ENCODE measurements at regions of chr19 and their contacts with region 1.

Region 1: GRCh38 chr19:29671393-29672160 is 6.3 kb downstream of the PLEKHF1 start:
- DNase-seq: peak in 2 of 3 donors; percentile 63 to 72
- ATAC-seq: peak; percentile 58 to 67 (median 61)
- H3K4me3 ChIP-seq: no peak overlapping the region
- H3K27ac ChIP-seq: peak overlapping the region; percentile 23 to 60 (median 43)
- H3K4me1 ChIP-seq: peaks cover 0 to 83% (median 31%) of the 10 kb centered on the region in 4 donors
- H3K27me3 ChIP-seq: no peaks in the 10 kb centered on the region
- CTCF ChIP-seq: peak in 2 of 4 donors; percentile 8 to 38
- POLR2A ChIP-seq: no peak

Region 2: DNA sequence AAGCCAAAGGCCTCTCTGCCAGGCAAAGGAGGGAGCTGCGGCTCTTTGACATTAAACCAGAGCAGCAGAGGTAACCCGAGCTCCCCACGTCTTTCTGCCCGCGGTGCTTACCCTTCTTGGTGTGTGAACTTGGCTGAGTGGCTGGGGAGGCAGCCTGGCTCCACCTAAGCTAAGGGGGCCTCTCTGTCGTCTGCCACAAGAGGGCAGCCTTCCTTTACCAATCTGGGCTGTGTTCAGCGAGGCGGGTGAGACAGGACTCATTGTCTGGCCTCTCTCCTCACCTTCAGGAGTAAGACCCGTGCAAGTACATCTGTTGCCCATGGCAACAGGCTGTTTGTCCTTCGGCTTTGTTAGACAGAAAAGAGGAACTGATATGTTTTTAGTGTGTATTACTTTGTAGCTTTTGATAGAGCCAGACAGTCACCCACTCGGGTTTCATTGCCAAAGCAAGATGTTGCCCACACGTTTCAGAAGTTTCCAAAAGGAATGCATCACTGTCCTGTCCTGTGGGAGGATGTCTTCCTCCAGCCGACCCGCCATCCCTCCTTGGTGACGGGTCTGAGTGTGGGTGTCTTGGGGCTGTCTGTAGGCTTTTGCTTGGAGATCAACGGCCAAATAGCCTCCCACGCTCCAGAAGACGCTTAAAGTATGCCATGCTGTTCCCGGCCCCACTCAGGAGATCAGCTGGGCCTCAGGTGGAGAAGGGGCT is 60.9 kb before region 1 on chr19:
- intact Hi-C with region 1: loop called (anchors 10 kb)
- DNase-seq: peak; percentile 81 to 83 (median 82)
- ATAC-seq: peak; percentile 71 to 81 (median 76)
- H3K4me3 ChIP-seq: no peak overlapping the region
- H3K27ac ChIP-seq: no peak overlapping the region
- H3K4me1 ChIP-seq: peaks cover 0 to 28% (median 10%) of the 10 kb centered on the region in 4 donors
- H3K27me3 ChIP-seq: no peaks in the 10 kb centered on the region
- CTCF ChIP-seq: peak; percentile 81 to 96 (median 91)
- POLR2A ChIP-seq: no peak

Region 3: DNA sequence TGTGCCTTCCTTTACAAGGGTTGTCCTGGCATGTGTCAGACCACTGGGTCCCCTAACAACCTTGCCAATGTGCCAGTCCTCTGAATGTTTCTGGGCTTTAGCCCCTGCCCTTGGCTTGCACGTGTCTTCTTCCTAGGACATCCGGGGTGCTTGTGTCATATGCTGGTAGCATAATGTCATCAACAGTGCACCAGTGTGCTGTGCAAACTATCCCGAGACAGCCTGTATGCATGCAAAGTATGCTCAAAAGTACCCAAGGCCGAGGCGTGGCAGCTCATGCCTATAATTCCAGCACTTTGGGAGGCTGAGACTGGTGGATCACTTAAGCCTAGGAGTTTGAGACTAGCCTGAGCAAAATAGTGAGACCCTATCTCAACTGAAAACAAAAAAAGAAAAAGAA is 64.2 kb after region 1 on chr19:
- intact Hi-C with region 1: no loop called
- DNase-seq: no peak
- ATAC-seq: no peak
- H3K4me3 ChIP-seq: no peak overlapping the region
- H3K27ac ChIP-seq: no peak overlapping the region
- H3K4me1 ChIP-seq: no peaks in the 10 kb centered on the region
- H3K27me3 ChIP-seq: no peaks in the 10 kb centered on the region
- CTCF ChIP-seq: no peak
- POLR2A ChIP-seq: no peak

Region 4: GRCh38 chr19:29908963-29909944 is 237.7 kb after region 1 on chr19:
- intact Hi-C with region 1: no loop called
- DNase-seq: no peak
- ATAC-seq: no peak
- H3K4me3 ChIP-seq: no peak overlapping the region
- H3K27ac ChIP-seq: no peak overlapping the region
- H3K4me1 ChIP-seq: no peaks in the 10 kb centered on the region
- H3K27me3 ChIP-seq: no peaks in the 10 kb centered on the region
- CTCF ChIP-seq: no peak
- POLR2A ChIP-seq: no peak